Tibial artery (tissue), 4 donors: ENCODE measurements at regions of chr7 and their contacts with region 1.

Region 1: GRCh38 chr7:133081599-133082389 is at the start of gene CHCHD3:
- DNase-seq: peak; percentile 98 to 99
- H3K4me3 ChIP-seq: peak within 1 kb of the TSS; percentile 94 to 98
- H3K27ac ChIP-seq: peak within 1 kb of the TSS; percentile 83 to 85
- H3K4me1 ChIP-seq: peaks cover 0 to 27% (median 15%) of the 10 kb centered on the region in 4 donors
- H3K27me3 ChIP-seq: no peaks in the 10 kb centered on the region
- CTCF ChIP-seq: no peak

Region 2: DNA sequence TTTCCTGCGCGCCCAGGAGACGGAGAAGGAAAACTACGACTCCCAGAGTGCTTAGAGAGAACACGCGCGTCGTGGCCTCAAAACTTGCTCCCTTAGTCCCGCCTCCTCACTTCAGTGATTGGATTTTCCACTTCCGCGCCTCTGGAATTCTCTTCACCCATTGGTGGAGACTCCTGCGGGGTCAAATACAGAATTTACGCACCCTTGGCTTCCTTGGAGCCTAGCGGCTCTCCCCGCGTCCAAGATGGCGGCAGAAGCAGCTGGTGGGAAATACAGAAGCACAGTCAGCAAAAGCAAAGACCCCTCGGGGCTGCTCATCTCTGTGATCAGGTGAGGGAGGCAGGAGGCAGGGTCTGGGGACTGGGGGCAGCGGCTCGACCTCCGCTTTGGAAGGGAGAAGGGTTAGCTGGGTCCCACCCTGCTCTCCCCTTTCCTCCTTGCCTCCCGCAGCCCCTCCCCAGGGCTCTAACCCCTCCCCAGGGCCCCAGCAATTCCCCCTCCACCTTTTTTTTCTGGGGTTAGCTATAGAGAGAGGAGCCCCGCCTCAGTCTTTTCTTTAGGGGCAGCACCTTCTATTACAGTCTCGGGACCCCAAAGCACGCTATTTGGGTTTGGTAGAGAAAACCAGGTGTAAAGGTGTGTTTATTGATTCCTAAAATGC is 171.2 kb after region 1 on chr7 and contains the start of gene EXOC4:
- intact Hi-C with region 1: loop called (anchors 10 kb)
- DNase-seq: peak; percentile 91 to 96
- H3K4me3 ChIP-seq: peak within 1 kb of the TSS; percentile 87 to 88
- H3K27ac ChIP-seq: peak within 1 kb of the TSS; percentile 86 to 92
- H3K4me1 ChIP-seq: peaks cover 0 to 18% (median 7%) of the 10 kb centered on the region in 4 donors
- H3K27me3 ChIP-seq: no peaks in the 10 kb centered on the region
- CTCF ChIP-seq: no peak

Region 3: GRCh38 chr7:133275008-133275407 is 193.2 kb after region 1 on chr7:
- intact Hi-C with region 1: no loop called
- DNase-seq: no peak
- H3K4me3 ChIP-seq: no peak overlapping the region
- H3K27ac ChIP-seq: no peak overlapping the region
- H3K4me1 ChIP-seq: no peaks in the 10 kb centered on the region
- H3K27me3 ChIP-seq: no peaks in the 10 kb centered on the region
- CTCF ChIP-seq: no peak